ENCODE measurements at regions of chr2 and their contacts with region 1.

Region 1: GRCh38 chr2:75646583-75647425 is at the start of gene MRPL19:
- DNase-seq: peak; percentile 92
- total RNA-seq, gene MRPL19: 42.7 to 43.5 TPM

Region 2: GRCh38 chr2:74602586-74603281 is 1044.1 kb before region 1 on chr2:
- intact Hi-C with region 1: no loop called
- DNase-seq: no peak

Region 3: GRCh38 chr2:75186821-75187220 is 460.0 kb before region 1 on chr2:
- intact Hi-C with region 1: no loop called
- DNase-seq: no peak

Region 4: DNA sequence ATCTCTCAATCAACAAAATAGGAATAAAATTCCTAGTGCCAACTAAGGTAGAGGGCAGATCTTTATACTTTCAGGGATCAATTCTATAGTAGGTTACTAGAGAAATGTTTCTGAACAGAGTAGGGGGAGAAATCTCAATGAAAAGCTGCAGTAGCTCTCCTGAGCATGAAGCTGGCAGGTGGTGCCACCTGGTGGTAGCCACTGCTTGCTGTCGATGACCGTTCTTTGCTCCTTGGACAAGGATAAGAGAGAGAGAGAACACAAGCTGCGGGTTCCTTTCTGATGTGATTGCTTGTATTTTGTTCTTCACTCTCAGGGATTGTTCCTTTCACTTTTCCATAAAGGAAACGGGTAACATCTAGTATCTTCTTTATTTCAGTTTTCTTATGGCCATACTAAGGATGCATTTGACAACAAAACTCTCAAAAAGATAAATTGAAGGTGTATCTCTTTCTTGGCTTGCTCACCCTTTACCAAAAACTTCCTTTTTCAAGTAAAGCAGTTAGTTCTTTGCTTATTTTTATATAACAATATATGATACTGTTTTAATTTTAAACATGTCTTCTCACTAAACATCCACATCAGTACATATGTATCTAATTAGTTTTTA is 18.8 kb before region 1 on chr2:
- intact Hi-C with region 1: loop called in 1 of 2 experiments (anchors 1 kb)
- DNase-seq: peak; percentile 87

Measured in posterior vena cava (tissue), 2 donors.